ENCODE measurements at regions of chr2 and their contacts with region 1.

Region 1: GRCh38 chr2:240499309-240500301 is 58.2 kb downstream of the ANKMY1 start:
- DNase-seq: no peak
- ATAC-seq: no peak
- H3K4me3 Mint-ChIP-seq: no peak overlapping the region
- H3K27ac Mint-ChIP-seq: no peak overlapping the region
- H3K4me1 Mint-ChIP-seq: no peaks in the 10 kb centered on the region
- H3K27me3 Mint-ChIP-seq: peaks cover 10% of the 10 kb centered on the region
- CTCF ChIP-seq: no peak

Region 2: GRCh38 chr2:240459401-240460252 is 40.0 kb before region 1 on chr2:
- CTCF ChIA-PET with region 1: interaction called, 21 read pairs
- POLR2A ChIA-PET with region 1: no interaction called
- DNase-seq: peak; percentile 16
- ATAC-seq: no peak
- H3K4me3 Mint-ChIP-seq: no peak overlapping the region
- H3K27ac Mint-ChIP-seq: no peak overlapping the region
- H3K4me1 Mint-ChIP-seq: peaks cover 22% of the 10 kb centered on the region
- H3K27me3 Mint-ChIP-seq: peaks cover 20% of the 10 kb centered on the region
- CTCF ChIP-seq: no peak